ENCODE measurements at regions of chr5 and their contacts with region 1.

Region 1: GRCh38 chr5:80092486-80093107 is 57.4 kb downstream of the THBS4 start:
- DNase-seq: no peak
- ATAC-seq: peak; percentile 36; the same call in 1 of the 2 replicates
- H3K4me3 ChIP-seq: no peak overlapping the region
- H3K27ac ChIP-seq: no peak overlapping the region
- H3K4me1 ChIP-seq: no peaks in the 10 kb centered on the region
- H3K27me3 ChIP-seq: no peaks in the 10 kb centered on the region
- CTCF ChIP-seq: no peak

Region 2: GRCh38 chr5:80125962-80126480 is 33.4 kb after region 1 on chr5:
- CTCF ChIA-PET with region 1: no interaction called
- POLR2A ChIA-PET with region 1: no interaction called
- in situ Hi-C with region 1: no loop called
- intact Hi-C with region 1: no loop called
- DNase-seq: no peak
- ATAC-seq: no peak
- H3K4me3 ChIP-seq: no peak overlapping the region
- H3K27ac ChIP-seq: no peak overlapping the region
- H3K4me1 ChIP-seq: no peaks in the 10 kb centered on the region
- H3K27me3 ChIP-seq: no peaks in the 10 kb centered on the region
- CTCF ChIP-seq: no peak

Region 3: DNA sequence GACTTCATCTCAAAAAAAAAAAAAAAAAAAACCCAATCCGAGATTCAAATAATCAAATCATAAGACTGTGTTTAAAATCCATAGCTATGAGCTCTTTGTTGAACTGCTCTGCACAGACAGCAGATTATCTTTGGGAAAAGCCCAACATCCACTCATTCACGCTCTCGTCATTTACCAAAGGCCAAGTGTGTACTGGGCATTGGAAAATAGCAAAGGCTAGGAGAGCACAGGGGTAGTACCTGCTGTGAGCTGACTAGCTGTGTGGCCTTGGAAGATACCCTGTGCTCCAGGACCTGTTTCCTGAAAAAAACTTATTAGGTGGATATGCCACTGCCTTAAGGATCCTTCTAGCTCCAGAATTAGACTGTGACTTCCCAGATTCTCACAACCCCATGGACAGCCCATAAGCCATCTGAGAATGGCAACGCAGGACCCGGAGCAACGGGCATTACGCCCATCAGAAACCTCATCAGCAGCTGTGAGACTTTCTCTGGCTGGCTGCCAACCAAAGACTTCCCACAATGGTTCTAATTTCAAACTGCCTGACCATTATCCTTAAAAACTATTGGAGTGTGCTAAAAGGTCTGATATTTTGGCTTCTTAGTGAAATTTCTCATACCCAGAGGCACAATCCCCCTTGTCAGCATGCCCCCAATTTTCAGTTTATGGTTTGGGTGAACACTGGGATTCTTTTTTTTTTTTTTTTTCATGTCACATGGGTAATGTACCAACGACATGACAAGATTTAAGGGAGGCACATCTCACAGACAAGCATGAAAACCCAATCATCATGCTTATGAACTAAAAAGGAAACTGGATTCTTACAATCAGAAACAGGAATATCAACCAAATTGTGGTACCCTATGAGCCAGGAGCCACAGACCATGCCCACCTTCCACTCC is 146.4 kb after region 1 on chr5:
- CTCF ChIA-PET with region 1: no interaction called
- POLR2A ChIA-PET with region 1: interaction called, 26 read pairs
- in situ Hi-C with region 1: no loop called
- intact Hi-C with region 1: no loop called
- DNase-seq: no peak
- ATAC-seq: no peak
- H3K4me3 ChIP-seq: no peak overlapping the region
- H3K27ac ChIP-seq: no peak overlapping the region
- H3K4me1 ChIP-seq: peaks cover 13% of the 10 kb centered on the region; the same call in 1 of the 2 replicates
- H3K27me3 ChIP-seq: no peaks in the 10 kb centered on the region
- CTCF ChIP-seq: no peak

Region 4: DNA sequence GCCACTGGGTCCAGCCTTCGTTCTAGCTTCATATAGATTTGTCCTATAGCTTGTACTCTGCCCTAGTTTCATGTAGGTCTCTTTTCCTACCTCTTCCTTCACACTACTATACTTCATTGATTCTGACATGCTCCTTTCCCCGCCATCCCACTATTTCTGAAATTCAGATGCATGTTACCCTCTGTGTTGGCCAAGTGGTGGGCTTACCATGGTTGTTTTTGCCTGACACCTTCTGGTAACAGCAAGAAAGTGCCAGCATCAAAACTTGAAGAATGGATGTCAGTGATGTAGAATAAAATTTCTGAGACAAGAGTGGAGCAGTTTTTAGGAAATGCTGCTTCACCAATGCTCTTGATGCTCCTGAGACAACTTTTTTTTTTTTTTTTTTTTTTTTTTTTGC is 182.8 kb after region 1 on chr5:
- CTCF ChIA-PET with region 1: interaction called, 5 read pairs
- POLR2A ChIA-PET with region 1: interaction called, 3 read pairs
- in situ Hi-C with region 1: no loop called
- intact Hi-C with region 1: loop called (anchors 2 kb)
- DNase-seq: no peak
- ATAC-seq: peak; percentile 78
- H3K4me3 ChIP-seq: no peak overlapping the region
- H3K27ac ChIP-seq: no peak overlapping the region
- H3K4me1 ChIP-seq: no peaks in the 10 kb centered on the region
- H3K27me3 ChIP-seq: no peaks in the 10 kb centered on the region
- CTCF ChIP-seq: peak; percentile 72

Region 5: GRCh38 chr5:80308526-80308925 is 215.9 kb after region 1 on chr5:
- CTCF ChIA-PET with region 1: interaction called, 9 read pairs
- POLR2A ChIA-PET with region 1: interaction called, 3 read pairs
- in situ Hi-C with region 1: no loop called
- intact Hi-C with region 1: loop called (anchors 1 kb)
- DNase-seq: no peak
- ATAC-seq: no peak
- H3K4me3 ChIP-seq: no peak overlapping the region
- H3K27ac ChIP-seq: no peak overlapping the region
- H3K4me1 ChIP-seq: no peaks in the 10 kb centered on the region
- H3K27me3 ChIP-seq: no peaks in the 10 kb centered on the region
- CTCF ChIP-seq: no peak